ENCODE measurements at regions of chr3 and their contacts with region 1.

Region 1: DNA sequence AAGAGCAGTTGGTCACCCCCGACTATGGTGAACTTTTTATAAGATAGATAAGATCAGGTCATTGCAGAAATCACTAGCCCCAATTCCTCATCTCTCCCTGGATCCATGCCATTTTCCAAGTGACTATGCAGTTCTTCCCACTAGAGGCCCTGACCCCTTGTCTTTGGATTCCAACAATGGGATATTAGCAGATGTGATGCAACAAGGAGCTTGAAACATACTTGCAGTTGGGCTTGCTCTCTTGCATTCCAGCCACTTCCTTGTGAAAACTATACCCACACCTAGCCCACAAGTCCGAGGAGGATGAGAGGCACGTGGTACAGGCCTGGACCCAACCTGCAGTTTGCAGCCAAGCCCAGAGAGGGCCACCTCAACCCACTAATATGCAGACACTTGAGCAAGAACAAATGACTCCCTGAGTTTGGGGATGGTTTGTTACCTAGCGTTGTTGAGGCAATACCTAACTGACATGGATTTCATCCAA is 60.6 kb downstream of the SUCLG2 start:
- DNase-seq: peak; percentile 18
- ATAC-seq: no peak
- H3K4me3 Mint-ChIP-seq: no peak overlapping the region
- H3K27ac Mint-ChIP-seq: no peak overlapping the region
- H3K4me1 Mint-ChIP-seq: peaks cover 33% of the 10 kb centered on the region
- H3K27me3 Mint-ChIP-seq: no peaks in the 10 kb centered on the region

Region 2: DNA sequence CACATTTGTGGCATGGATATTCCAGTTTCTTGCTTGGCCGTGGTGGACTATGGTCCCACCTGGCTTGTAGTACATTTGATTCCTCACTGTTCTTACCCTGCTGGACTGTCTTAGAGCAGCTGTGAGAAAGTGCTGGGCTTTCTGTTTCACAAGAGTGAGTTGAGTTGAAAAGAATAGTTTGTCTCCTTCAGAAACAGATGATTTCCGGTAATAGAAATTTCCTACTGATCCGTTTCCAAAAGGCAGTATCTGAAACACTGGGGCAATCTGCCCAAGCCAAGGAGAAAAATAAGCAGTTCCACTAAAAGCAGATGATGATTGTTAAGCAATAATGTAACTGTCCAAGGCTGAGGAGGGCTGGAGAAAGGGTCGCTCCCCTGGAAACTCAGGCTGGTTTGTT is 35.4 kb before region 1 on chr3:
- CTCF ChIA-PET with region 1: no interaction called
- POLR2A ChIA-PET with region 1: no interaction called
- intact Hi-C with region 1: no loop called
- DNase-seq: no peak
- ATAC-seq: no peak
- H3K4me3 Mint-ChIP-seq: no peak overlapping the region
- H3K27ac Mint-ChIP-seq: no peak overlapping the region
- H3K4me1 Mint-ChIP-seq: peaks cover 7% of the 10 kb centered on the region
- H3K27me3 Mint-ChIP-seq: no peaks in the 10 kb centered on the region

Region 3: GRCh38 chr3:67610458-67610857 is 16.7 kb after region 1 on chr3:
- CTCF ChIA-PET with region 1: interaction called, 3 read pairs
- POLR2A ChIA-PET with region 1: interaction called, 13 read pairs
- intact Hi-C with region 1: no loop called
- DNase-seq: no peak
- ATAC-seq: no peak
- H3K4me3 Mint-ChIP-seq: no peak overlapping the region
- H3K27ac Mint-ChIP-seq: no peak overlapping the region
- H3K4me1 Mint-ChIP-seq: peaks cover 24% of the 10 kb centered on the region
- H3K27me3 Mint-ChIP-seq: no peaks in the 10 kb centered on the region